Psoas muscle (tissue), 8 donors: ENCODE measurements at regions of chr6 and their contacts with region 1.

Region 1: GRCh38 chr6:37207903-37208456 is 38.0 kb downstream of the PIM1 start:
- DNase-seq: peak; percentile 83 to 85
- ATAC-seq: peak; percentile 64 to 76 (median 74)
- H3K4me3 ChIP-seq: no peak overlapping the region
- H3K27ac ChIP-seq: no peak overlapping the region
- H3K4me1 ChIP-seq: no peaks in the 10 kb centered on the region
- H3K27me3 ChIP-seq: no peaks in the 10 kb centered on the region
- CTCF ChIP-seq: peak; percentile 66

Region 2: DNA sequence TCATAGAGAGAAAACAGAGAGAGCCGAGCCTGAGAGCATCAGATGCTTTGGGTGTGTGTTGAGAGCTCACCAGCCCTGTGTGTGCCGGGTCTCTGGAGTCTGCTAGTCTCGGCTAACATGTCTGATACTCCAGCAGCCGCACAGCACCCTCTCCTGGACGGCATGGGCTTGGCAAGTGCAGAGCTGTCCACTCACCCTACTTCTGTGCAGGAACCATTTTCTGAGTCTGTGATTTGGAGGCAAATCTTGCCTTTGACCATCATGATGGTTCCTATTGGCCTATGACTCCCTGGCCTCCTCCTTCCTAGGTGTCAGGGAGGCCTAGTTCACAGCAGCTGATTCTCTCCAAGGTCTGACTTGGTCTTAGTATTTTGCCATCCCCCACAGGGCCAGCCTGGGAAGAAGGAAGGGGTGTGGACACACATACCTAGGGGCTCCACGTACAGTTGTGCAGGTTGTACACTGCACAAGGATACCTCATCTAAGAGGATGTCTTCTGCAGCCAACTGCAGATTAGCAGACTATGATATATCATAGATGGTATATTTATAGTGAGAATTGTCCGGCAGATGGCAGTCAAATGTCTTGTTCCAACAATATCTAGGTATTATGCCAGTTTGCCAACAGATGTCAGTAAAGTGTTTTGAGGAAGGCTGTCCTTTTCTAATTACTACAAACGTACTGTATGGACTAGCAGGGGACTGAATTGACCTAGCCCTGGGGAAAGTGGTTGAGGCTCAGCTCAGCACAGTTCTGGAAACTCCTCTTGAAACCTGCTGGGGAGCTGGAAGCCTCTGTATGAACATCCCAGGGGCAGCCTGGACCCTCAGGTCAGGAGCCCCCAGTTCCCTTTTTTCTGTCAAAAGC is 189.5 kb before region 1 on chr6:
- intact Hi-C with region 1: loop called (anchors 1 to 5 kb)
- DNase-seq: peak; percentile 90 to 95
- ATAC-seq: peak; percentile 96 to 99 (median 98)
- H3K4me3 ChIP-seq: no peak overlapping the region
- H3K27ac ChIP-seq: no peak overlapping the region
- H3K4me1 ChIP-seq: peaks cover 3% of the 10 kb centered on the region
- H3K27me3 ChIP-seq: no peaks in the 10 kb centered on the region
- CTCF ChIP-seq: peak; percentile 74

Region 3: GRCh38 chr6:37180075-37180474 is 27.9 kb before region 1 on chr6:
- intact Hi-C with region 1: no loop called
- DNase-seq: no peak
- ATAC-seq: no peak
- H3K4me3 ChIP-seq: no peak overlapping the region
- H3K27ac ChIP-seq: no peak overlapping the region
- H3K4me1 ChIP-seq: no peaks in the 10 kb centered on the region
- H3K27me3 ChIP-seq: no peaks in the 10 kb centered on the region
- CTCF ChIP-seq: no peak

Region 4: GRCh38 chr6:37483917-37484785 is 276.2 kb after region 1 on chr6:
- intact Hi-C with region 1: no loop called
- DNase-seq: peak; percentile 46 to 81
- ATAC-seq: peak; percentile 76 to 88 (median 80)
- H3K4me3 ChIP-seq: no peak overlapping the region
- H3K27ac ChIP-seq: no peak overlapping the region
- H3K4me1 ChIP-seq: no peaks in the 10 kb centered on the region
- H3K27me3 ChIP-seq: no peaks in the 10 kb centered on the region
- CTCF ChIP-seq: peak; percentile 71